ENCODE measurements at regions of chr6 and their contacts with region 1.

Region 1: GRCh38 chr6:63802606-63803206 is 167.1 kb downstream of the PHF3 start:
- DNase-seq: no peak
- H3K4me3 ChIP-seq: no peak overlapping the region
- H3K27ac ChIP-seq: no peak overlapping the region
- H3K4me1 ChIP-seq: peaks cover 39% of the 10 kb centered on the region
- H3K27me3 ChIP-seq: no peaks in the 10 kb centered on the region
- CTCF ChIP-seq: peak; percentile 71

Region 2: GRCh38 chr6:63307581-63308246 is 495.0 kb before region 1 on chr6:
- CTCF ChIA-PET with region 1: no interaction called
- dilution Hi-C with region 1: no loop called
- in situ Hi-C with region 1: no loop called
- intact Hi-C with region 1: loop called (anchors 2 kb)
- DNase-seq: peak; percentile 37
- H3K4me3 ChIP-seq: no peak overlapping the region
- H3K27ac ChIP-seq: no peak overlapping the region
- H3K4me1 ChIP-seq: no peaks in the 10 kb centered on the region
- H3K27me3 ChIP-seq: no peaks in the 10 kb centered on the region
- CTCF ChIP-seq: peak; percentile 50 to 59

Region 3: GRCh38 chr6:63352587-63353285 is 450.0 kb before region 1 on chr6:
- CTCF ChIA-PET with region 1: interaction called, 15 read pairs
- dilution Hi-C with region 1: no loop called
- in situ Hi-C with region 1: loop called (anchors 10 to 25 kb)
- intact Hi-C with region 1: loop called (anchors 1 kb)
- DNase-seq: peak; percentile 22
- H3K4me3 ChIP-seq: no peak overlapping the region
- H3K27ac ChIP-seq: no peak overlapping the region
- H3K4me1 ChIP-seq: peaks cover 10% of the 10 kb centered on the region
- H3K27me3 ChIP-seq: no peaks in the 10 kb centered on the region
- CTCF ChIP-seq: peak; percentile 68 to 76

Region 4: GRCh38 chr6:63714091-63714490 is 88.6 kb before region 1 on chr6:
- CTCF ChIA-PET with region 1: no interaction called
- dilution Hi-C with region 1: no loop called
- in situ Hi-C with region 1: no loop called
- intact Hi-C with region 1: no loop called
- DNase-seq: no peak
- H3K4me3 ChIP-seq: no peak overlapping the region
- H3K27ac ChIP-seq: no peak overlapping the region
- H3K4me1 ChIP-seq: no peaks in the 10 kb centered on the region
- H3K27me3 ChIP-seq: no peaks in the 10 kb centered on the region
- CTCF ChIP-seq: no peak

Region 5: DNA sequence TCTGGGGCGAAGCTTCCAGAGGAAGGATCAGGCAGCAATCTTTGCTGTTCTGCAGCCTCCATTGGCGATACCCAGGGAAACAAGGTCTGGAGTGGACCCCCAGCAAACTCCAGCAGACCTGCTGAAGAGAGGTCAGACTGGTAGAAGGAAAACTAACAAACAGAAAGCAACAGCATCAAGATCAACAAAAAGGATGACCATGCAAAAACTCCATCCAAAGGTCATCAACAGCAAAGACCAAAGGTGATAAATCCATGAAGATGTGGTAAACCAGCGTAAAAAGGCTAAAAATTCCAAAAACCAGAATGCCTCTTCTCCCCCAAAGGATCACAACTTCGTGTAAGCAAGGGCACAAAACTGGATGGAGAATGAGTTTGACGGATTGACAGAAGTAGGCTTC is 85.7 kb after region 1 on chr6:
- CTCF ChIA-PET with region 1: no interaction called
- dilution Hi-C with region 1: no loop called
- in situ Hi-C with region 1: no loop called
- intact Hi-C with region 1: no loop called
- DNase-seq: no peak
- H3K4me3 ChIP-seq: no peak overlapping the region
- H3K27ac ChIP-seq: no peak overlapping the region
- H3K4me1 ChIP-seq: no peaks in the 10 kb centered on the region
- H3K27me3 ChIP-seq: no peaks in the 10 kb centered on the region
- CTCF ChIP-seq: no peak

Region 6: DNA sequence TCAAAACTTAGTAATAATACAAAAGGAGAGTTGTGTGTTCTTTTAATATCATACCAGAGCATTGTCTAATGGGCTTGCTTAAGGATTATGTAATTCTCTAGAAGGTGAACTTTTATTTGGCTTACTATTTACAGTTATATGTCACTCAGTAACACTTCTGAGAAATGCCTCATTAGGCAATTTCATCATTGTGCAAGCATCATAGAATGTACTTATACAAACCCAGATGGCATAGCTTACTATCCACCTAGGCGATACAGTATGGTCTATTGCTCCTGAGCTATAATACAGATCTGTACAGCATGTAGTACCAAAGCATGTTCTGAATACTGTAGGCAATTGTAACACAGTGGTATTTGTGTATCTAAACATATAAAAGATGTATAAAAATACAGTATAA is 173.0 kb after region 1 on chr6:
- CTCF ChIA-PET with region 1: no interaction called
- dilution Hi-C with region 1: no loop called
- in situ Hi-C with region 1: no loop called
- intact Hi-C with region 1: no loop called
- DNase-seq: no peak
- H3K4me3 ChIP-seq: no peak overlapping the region
- H3K27ac ChIP-seq: no peak overlapping the region
- H3K4me1 ChIP-seq: no peaks in the 10 kb centered on the region
- H3K27me3 ChIP-seq: no peaks in the 10 kb centered on the region
- CTCF ChIP-seq: no peak

Measured in mammary epithelial cell (primary cell).